HepG2 (cell line): ENCODE measurements at regions of chr6 and their contacts with region 1.

Region 1: DNA sequence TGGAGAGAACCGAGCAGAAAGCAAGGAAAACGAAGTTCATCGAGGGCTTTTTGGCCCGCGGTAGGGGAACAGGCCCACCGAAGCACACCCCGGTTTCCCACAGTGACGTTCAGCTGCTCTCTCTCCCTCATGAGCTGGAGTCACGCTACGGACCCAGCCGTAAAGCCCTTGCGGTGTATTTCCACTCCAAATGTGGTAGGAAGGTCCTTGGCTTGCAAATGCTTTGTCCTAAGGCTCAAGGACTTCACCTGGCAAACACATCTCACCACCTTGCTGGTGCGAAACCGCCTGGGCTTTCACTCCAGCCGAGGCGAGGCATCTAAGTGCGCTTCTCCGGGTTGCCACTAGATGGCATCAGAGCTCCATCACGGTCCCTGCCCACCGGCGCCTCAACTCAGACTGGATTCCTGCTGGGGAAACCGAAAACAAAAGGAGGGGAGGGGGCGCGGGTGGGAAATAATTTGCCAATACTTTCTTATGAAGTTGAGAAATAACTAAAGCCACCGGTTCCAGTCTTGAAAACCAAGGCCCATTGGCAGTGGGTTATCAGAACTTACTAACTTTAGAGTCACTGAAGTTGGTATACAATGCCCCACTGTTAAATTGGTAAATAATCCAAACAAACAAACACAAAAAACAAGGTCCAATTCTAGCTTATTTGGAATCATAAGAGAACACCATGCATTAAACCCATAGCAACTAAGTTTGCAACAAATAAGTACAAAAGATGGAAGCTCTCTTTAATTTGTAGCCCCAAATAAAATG is 13.4 kb upstream of the FOXC1 start:
- DNase-seq: peak; percentile 50
- ATAC-seq: peak; percentile 83
- H3K4me3 ChIP-seq: peak overlapping the region in 2 of 3 experiments; percentile 6 to 44; a peak in 2 of 6 replicates
- H3K27ac ChIP-seq: no peak overlapping the region
- H3K4me1 ChIP-seq: peaks cover 49% of the 10 kb centered on the region
- H3K27me3 ChIP-seq: peaks cover 11 to 83% of the 10 kb centered on the region in 2 experiments; a peak in 4 of 5 replicates
- CTCF ChIP-seq: peak; percentile 99
- EP300 ChIP-seq: no peak
- POLR2A ChIP-seq: no peak
- RAD21 ChIP-seq: peak; percentile 95

Region 2: DNA sequence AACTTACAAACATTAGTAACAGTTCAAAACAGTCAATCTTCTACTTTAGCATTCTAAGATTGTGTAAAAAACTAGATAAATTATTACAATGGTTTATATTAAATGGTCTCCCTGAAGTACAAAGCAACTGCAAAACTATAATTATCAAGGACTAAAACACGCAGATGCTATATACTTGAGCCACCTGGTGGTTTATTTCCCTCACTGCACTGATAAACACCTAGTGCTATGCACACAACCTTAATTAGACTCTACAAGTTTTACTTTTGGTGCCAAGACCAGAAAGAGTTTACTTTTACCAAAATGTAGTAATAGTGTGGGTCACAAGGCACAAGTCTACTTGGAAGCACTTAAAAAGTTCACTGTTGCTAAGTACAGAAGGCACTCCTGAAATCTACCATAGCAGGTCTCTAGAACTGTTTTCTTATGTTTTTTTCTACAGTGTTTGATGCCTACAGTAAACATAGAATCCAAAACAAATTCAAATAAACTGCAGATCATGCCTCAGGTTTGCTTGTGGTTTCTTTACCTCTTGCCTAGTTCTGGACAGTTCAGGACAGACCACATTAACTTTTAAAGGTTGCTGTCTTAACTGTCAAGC is 599.9 kb after region 1 on chr6:
- CTCF ChIA-PET with region 1: interaction called, 15 read pairs
- POLR2A ChIA-PET with region 1: no interaction called
- in situ Hi-C with region 1: no loop called
- intact Hi-C with region 1: loop called (anchors 1 kb)
- DNase-seq: peak; percentile 40
- ATAC-seq: peak; percentile 71
- H3K4me3 ChIP-seq: no peak overlapping the region
- H3K27ac ChIP-seq: no peak overlapping the region
- H3K4me1 ChIP-seq: peaks cover 9% of the 10 kb centered on the region; the same call in 1 of the 2 replicates
- H3K27me3 ChIP-seq: no peaks in the 10 kb centered on the region
- CTCF ChIP-seq: peak; percentile 72
- EP300 ChIP-seq: no peak
- POLR2A ChIP-seq: no peak
- RAD21 ChIP-seq: 0 out of 2 replicates have a peak, but pooled peaks have one; percentile 24

Region 3: GRCh38 chr6:2353412-2354137 is 757.3 kb after region 1 on chr6:
- CTCF ChIA-PET with region 1: interaction called, 10 read pairs
- POLR2A ChIA-PET with region 1: no interaction called
- in situ Hi-C with region 1: loop called (anchors 5 kb)
- intact Hi-C with region 1: loop called (anchors 2 kb)
- DNase-seq: peak; percentile 79
- ATAC-seq: peak; percentile 86
- H3K4me3 ChIP-seq: no peak overlapping the region
- H3K27ac ChIP-seq: no peak overlapping the region
- H3K4me1 ChIP-seq: peaks cover 13% of the 10 kb centered on the region; the same call in 1 of the 2 replicates
- H3K27me3 ChIP-seq: no peaks in the 10 kb centered on the region
- CTCF ChIP-seq: peak; percentile 88
- EP300 ChIP-seq: no peak
- POLR2A ChIP-seq: no peak
- RAD21 ChIP-seq: peak; percentile 91

Region 4: GRCh38 chr6:2634139-2634964 is 1038.1 kb after region 1 on chr6:
- CTCF ChIA-PET with region 1: interaction called, 8 read pairs
- POLR2A ChIA-PET with region 1: no interaction called
- in situ Hi-C with region 1: loop called (anchors 5 kb)
- intact Hi-C with region 1: loop called (anchors 1 kb)
- DNase-seq: peak; percentile 51
- ATAC-seq: peak; percentile 93
- H3K4me3 ChIP-seq: peak overlapping the region; percentile 28 to 68 (median 32); a peak in 5 of 6 replicates
- H3K27ac ChIP-seq: no peak overlapping the region
- H3K4me1 ChIP-seq: peaks cover 31% of the 10 kb centered on the region
- H3K27me3 ChIP-seq: peaks cover 1 to 72% of the 10 kb centered on the region in 2 experiments
- CTCF ChIP-seq: peak; percentile 98
- EP300 ChIP-seq: no peak
- POLR2A ChIP-seq: no peak
- RAD21 ChIP-seq: peak; percentile 98

Region 5: DNA sequence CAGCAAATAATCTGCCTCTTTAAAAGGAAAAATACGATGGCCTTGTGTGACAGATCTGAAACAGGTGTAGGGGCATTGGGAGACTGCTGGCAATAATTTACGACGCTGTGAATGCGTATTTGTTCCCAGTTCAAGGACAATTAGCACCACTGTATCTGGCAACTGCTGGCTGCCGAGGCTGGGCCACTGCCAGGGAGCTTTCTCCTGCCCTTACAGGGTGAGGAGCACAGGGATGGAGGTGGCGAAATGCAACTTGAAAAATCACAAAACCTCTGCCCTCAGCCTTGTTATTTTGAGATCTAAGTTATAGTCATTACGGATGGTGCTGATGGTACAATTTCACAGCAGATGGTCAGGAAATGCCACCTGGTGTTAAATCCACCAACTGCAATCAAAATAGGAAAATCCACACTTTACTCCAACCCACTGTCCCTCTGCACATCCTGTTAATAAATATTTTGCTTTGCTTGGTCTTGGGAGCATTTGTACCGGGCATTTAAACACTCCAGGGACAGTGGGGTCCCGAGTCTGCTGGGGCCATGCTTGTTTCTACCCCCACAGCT is 1148.0 kb after region 1 on chr6:
- CTCF ChIA-PET with region 1: interaction called, 6 read pairs
- POLR2A ChIA-PET with region 1: no interaction called
- in situ Hi-C with region 1: loop called (anchors 5 kb)
- intact Hi-C with region 1: loop called (anchors 5 kb)
- DNase-seq: no peak
- ATAC-seq: peak; percentile 89
- H3K4me3 ChIP-seq: peak overlapping the region in 1 of 3 experiments; percentile 5; a peak in 1 of 6 replicates
- H3K27ac ChIP-seq: no peak overlapping the region
- H3K4me1 ChIP-seq: peaks cover 28% of the 10 kb centered on the region
- H3K27me3 ChIP-seq: peaks cover 0 to 6% of the 10 kb centered on the region in 2 experiments; a peak in 1 of 5 replicates
- CTCF ChIP-seq: 0 out of 2 replicates have a peak, but pooled peaks have one; percentile 20
- EP300 ChIP-seq: peak in 1 of 2 experiments; percentile 5; a peak in 1 of 4 replicates
- POLR2A ChIP-seq: no peak
- RAD21 ChIP-seq: no peak

Region 6: DNA sequence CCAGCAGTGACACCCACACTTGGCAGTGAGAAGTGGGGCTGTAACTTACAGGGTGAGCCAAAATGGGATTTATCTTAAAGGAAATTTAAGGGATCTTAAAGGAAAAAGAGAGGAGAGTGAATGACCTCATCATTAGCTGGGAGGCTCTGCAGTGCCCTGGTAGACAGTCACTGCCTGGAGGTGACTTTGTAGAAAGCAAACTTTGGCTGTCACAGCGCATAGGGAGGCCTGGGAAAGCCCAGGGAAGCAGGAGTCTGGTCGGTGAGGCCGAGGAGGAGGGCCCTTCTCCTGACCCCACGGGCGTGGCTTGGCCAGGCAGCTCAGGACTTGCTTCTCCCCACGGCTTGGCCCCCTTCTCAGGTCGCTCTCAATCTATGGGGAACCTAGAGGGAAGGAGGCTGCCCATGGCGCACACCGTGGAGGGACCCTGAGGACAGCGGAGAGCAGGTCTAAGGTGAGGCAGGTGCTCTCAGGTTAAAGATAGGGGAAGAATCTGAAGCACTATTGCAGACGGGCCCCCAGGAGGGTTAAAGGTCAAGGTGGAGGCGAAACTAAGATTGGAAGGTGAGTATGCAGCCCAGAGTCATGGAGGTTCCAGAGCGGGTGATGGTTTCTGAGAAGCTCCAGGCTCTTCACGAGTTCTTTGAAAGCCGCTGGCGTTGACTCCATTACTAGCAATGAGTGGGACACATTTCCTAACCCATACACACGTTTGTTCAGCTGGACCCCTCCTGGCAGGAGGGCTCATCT is 1456.4 kb after region 1 on chr6:
- CTCF ChIA-PET with region 1: no interaction called
- POLR2A ChIA-PET with region 1: no interaction called
- in situ Hi-C with region 1: no loop called
- intact Hi-C with region 1: loop called (anchors 10 kb)
- DNase-seq: no peak
- ATAC-seq: peak; percentile 35
- H3K4me3 ChIP-seq: peak overlapping the region; percentile 57 to 80 (median 72)
- H3K27ac ChIP-seq: peak overlapping the region; percentile 85
- H3K4me1 ChIP-seq: peaks cover 46% of the 10 kb centered on the region
- H3K27me3 ChIP-seq: peaks cover 0 to 30% of the 10 kb centered on the region in 2 experiments; a peak in 2 of 5 replicates
- CTCF ChIP-seq: no peak; the same call in 1 of the 2 replicates
- EP300 ChIP-seq: 0 out of 4 replicates have a peak, but pooled peaks of 1 of the 2 experiments have one; percentile 19
- POLR2A ChIP-seq: no peak
- RAD21 ChIP-seq: no peak